MCF 10A (cell line): ENCODE measurements at regions of chr4 and their contacts with region 1.

Region 1: GRCh38 chr4:122602277-122603142 is 18.4 kb downstream of the IL21 start:
- DNase-seq: peak; percentile 59
- H3K4me3 Mint-ChIP-seq: peak overlapping the region; percentile 47
- H3K27ac Mint-ChIP-seq: no peak overlapping the region
- H3K4me1 Mint-ChIP-seq: no peaks in the 10 kb centered on the region
- H3K27me3 Mint-ChIP-seq: peaks cover 18% of the 10 kb centered on the region
- CTCF ChIP-seq: peak; percentile 43

Region 2: GRCh38 chr4:122612540-122612939 is 10.0 kb after region 1 on chr4:
- CTCF ChIA-PET with region 1: interaction called, 24 read pairs
- POLR2A ChIA-PET with region 1: interaction called, 5 read pairs
- intact Hi-C with region 1: no loop called
- DNase-seq: peak; percentile 32
- H3K4me3 Mint-ChIP-seq: no peak overlapping the region
- H3K27ac Mint-ChIP-seq: no peak overlapping the region
- H3K4me1 Mint-ChIP-seq: peaks cover 5% of the 10 kb centered on the region
- H3K27me3 Mint-ChIP-seq: no peaks in the 10 kb centered on the region
- CTCF ChIP-seq: no peak

Region 3: GRCh38 chr4:122692641-122693520 is 90.4 kb after region 1 on chr4:
- CTCF ChIA-PET with region 1: interaction called, 10 read pairs
- POLR2A ChIA-PET with region 1: no interaction called
- intact Hi-C with region 1: no loop called
- DNase-seq: no peak
- H3K4me3 Mint-ChIP-seq: no peak overlapping the region
- H3K27ac Mint-ChIP-seq: no peak overlapping the region
- H3K4me1 Mint-ChIP-seq: no peaks in the 10 kb centered on the region
- H3K27me3 Mint-ChIP-seq: no peaks in the 10 kb centered on the region
- CTCF ChIP-seq: no peak

Region 4: GRCh38 chr4:122732329-122733026 is 130.0 kb after region 1 on chr4 and contains the start of gene BBS12:
- CTCF ChIA-PET with region 1: interaction called, 17 read pairs
- POLR2A ChIA-PET with region 1: interaction called, 3 read pairs
- intact Hi-C with region 1: loop called (anchors 5 kb)
- DNase-seq: peak; percentile 99
- H3K4me3 Mint-ChIP-seq: peak within 1 kb of the TSS; percentile 84
- H3K27ac Mint-ChIP-seq: peak within 1 kb of the TSS; percentile 93
- H3K4me1 Mint-ChIP-seq: peaks cover 4% of the 10 kb centered on the region
- H3K27me3 Mint-ChIP-seq: no peaks in the 10 kb centered on the region
- CTCF ChIP-seq: peak; percentile 8
- total RNA-seq, gene BBS12: 4.7 and 8.3 TPM in 2 replicates

Region 5: DNA sequence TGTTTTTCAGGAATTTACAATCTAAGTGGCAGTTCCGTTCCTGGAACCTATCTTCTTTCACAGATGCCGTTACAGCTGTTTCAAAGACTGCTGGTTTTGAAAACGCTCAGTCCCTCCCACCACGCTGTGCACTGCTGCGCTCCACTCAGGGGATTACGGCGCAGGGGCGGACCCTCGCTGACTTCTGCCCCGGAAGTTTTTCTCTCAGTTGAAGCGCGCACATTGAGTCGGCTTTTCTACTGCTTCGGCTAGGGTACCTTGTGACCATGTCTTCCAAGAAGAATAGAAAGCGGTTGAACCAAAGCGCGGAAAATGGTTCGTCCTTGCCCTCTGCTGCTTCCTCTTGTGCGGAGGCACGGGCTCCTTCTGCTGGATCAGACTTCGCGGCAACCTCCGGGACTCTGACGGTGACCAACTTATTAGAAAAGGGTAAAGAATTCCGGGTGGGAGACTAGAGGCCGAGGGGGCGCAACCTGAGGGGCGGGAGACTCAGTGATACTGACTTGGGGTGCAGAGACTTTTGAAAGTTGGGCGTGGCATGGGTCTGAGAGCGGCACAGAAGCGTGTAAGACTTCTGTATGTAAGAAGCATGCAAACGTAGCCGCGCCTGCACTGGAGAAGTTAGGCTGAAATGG is 320.5 kb after region 1 on chr4:
- CTCF ChIA-PET with region 1: interaction called, 46 read pairs
- POLR2A ChIA-PET with region 1: interaction called, 5 read pairs
- intact Hi-C with region 1: no loop called
- DNase-seq: peak; percentile 86
- H3K4me3 Mint-ChIP-seq: no peak overlapping the region
- H3K27ac Mint-ChIP-seq: peak overlapping the region; percentile 74
- H3K4me1 Mint-ChIP-seq: peaks cover 5% of the 10 kb centered on the region
- H3K27me3 Mint-ChIP-seq: no peaks in the 10 kb centered on the region
- CTCF ChIP-seq: no peak